GM18951 (cell line): ENCODE measurements at regions of chr9 and their contacts with region 1.

Region 1: DNA sequence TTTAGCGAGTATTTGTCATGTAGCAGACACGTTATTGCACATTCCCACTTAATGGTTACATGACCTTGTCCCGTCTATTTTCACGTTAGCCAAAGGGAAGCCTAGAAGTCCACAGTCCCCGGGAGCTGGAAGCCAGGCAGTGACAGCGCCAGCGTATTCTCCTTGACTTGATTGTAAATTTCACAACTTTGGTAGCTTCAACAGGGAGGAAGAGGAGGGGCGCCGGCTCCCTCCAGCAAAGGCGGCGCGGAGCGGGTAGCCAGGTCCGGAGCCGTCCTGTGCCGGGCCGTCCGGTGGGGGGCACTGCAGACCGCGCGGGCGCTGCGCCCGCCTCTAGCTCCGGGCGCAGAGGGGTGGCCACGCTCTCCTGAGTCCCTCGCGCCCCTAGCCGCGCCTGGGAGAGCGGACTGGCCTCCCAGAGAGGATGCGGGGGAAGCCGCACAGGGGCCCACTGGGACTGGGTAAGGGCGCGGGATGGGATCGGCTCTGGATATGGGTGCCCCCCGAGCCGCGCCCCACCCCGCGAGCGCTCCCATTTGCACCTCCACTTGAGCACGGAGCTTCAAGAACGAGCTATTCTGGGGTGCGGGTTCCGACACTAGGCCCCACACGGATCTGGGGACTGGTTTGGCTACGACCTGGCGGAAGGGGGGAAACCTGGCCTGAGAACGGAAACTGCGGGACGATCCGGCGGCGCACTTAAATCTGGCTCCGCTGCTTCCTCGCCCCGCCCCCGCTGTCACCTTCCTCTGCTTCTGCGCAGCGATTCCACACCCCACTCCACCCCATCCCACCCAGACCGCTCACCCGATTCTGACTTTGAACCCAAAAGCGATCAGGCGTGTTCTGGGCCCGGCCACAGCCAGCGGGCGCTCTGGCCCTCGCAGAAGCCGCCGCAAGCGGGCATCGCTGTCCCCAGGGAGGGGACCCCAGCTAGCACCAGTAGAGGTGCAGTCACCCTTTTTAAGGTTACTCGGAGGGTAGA is 23.8 kb downstream of the KLF4 start:
- POLR2A ChIP-seq: no peak

Region 2: GRCh38 chr9:107323836-107324585 is 141.7 kb before region 1 on chr9:
- in situ Hi-C with region 1: no loop called
- POLR2A ChIP-seq: no peak

Region 3: GRCh38 chr9:107548048-107548800 is 82.5 kb after region 1 on chr9:
- in situ Hi-C with region 1: no loop called
- POLR2A ChIP-seq: no peak

Region 4: GRCh38 chr9:107833301-107833700 is 367.5 kb after region 1 on chr9:
- in situ Hi-C with region 1: no loop called
- POLR2A ChIP-seq: no peak

Region 5: DNA sequence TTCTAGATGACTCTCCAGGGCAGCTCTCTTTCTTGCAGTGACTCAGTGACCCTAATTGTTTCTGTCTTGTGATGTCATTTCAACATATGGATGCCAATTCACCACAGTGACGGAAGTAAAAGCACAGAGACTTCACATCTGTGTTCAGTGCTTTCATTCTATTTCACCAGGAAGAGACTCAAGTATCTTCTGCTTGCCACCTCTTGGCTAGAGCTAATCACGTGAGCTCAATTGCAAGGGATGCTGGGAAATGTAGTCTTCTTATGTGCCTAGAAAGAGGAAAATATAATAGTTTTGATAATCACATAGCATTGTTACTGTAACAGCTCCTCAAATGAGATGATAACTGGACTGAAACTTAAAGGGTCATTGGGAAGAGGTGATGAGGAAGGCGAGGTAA is 477.1 kb after region 1 on chr9:
- in situ Hi-C with region 1: no loop called
- POLR2A ChIP-seq: no peak

Region 6: DNA sequence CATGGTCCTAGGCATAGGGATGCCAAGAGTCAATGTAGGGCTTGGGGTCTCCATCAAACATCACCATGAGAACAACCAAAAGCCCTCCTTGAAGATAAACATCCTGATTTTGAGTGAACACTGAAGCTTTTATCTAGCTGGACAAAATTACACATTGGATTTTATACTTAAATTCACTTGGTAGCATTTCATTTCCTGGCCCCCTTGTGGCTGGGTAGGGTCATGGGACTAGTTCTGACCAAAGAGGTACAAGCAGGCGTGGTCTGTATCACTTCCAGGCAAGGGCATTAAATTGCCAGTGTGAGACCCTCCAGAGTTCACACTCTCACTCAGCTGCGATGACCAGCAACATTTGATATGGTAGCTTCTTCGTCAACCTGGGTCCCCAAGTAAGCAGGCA is 1069.8 kb after region 1 on chr9:
- in situ Hi-C with region 1: loop called (anchors 25 kb)
- POLR2A ChIP-seq: no peak